Sigmoid colon (tissue), 7 donors: ENCODE measurements at regions of chr14 and their contacts with region 1.

Region 1: DNA sequence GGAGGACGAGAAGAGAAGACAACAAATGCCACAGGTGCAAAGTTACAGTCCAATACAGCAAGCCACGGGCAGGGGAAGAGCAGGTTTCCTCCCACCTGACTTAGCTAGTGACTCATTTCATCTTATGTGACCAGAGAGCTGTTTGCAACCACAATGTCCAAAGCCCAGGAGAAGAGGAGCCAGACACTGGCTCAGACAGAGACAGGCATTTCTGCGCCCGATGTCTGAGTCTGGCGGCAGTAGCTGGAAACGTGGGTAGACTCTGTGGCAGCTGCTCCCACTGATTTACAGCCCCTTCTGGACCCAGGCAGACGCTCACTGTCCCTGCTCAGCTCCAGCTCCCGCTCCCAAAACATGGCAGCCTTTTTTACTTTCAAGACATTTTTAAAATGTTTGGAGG is 60.0 kb downstream of the CHGA start:
- DNase-seq: no peak
- H3K4me3 ChIP-seq: no peak overlapping the region
- H3K27ac ChIP-seq: peak overlapping the region in 3 of 4 donors; percentile 61 to 84 (median 66)
- H3K4me1 ChIP-seq: peaks cover 0 to 52% (median 37%) of the 10 kb centered on the region in 4 donors
- H3K27me3 ChIP-seq: no peaks in the 10 kb centered on the region
- CTCF ChIP-seq: no peak
- EP300 ChIP-seq: no peak
- POLR2A ChIP-seq: no peak

Region 2: DNA sequence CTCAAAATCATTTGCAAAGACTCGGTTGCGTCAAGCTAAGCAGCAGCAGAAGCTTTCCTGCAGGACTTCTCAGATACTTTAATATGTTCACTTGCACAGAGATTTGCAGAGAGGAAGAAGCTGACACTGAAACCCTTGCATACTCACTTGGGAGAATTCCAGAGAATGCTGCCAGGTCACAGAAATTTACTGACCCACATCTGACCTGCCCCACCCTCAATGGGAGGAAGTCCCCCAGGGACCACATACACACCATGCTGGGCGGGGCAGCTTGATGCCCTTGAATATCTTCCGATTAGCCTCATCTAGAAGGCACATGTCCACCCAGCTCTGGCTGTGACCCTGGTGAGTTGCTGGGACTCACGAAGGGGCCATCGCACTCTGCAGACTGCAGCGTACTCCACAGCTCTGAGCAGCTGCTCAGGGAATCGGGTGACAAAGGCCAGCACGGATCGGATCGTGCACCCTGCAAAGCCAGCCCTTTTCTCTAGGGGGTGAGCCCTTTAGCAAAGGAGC is 49.5 kb after region 1 on chr14:
- intact Hi-C with region 1: no loop called
- DNase-seq: no peak
- H3K4me3 ChIP-seq: no peak overlapping the region
- H3K27ac ChIP-seq: peak overlapping the region; percentile 74 to 94 (median 78)
- H3K4me1 ChIP-seq: peaks cover 0 to 76% (median 70%) of the 10 kb centered on the region in 4 donors
- H3K27me3 ChIP-seq: no peaks in the 10 kb centered on the region
- CTCF ChIP-seq: no peak
- EP300 ChIP-seq: no peak
- POLR2A ChIP-seq: no peak

Region 3: GRCh38 chr14:93045965-93046704 is 63.2 kb after region 1 on chr14:
- intact Hi-C with region 1: loop called (anchors 5 kb)
- DNase-seq: no peak
- H3K4me3 ChIP-seq: no peak overlapping the region
- H3K27ac ChIP-seq: peak overlapping the region; percentile 22 to 94 (median 69)
- H3K4me1 ChIP-seq: peaks cover 0 to 83% (median 62%) of the 10 kb centered on the region in 4 donors
- H3K27me3 ChIP-seq: no peaks in the 10 kb centered on the region
- CTCF ChIP-seq: no peak
- EP300 ChIP-seq: no peak
- POLR2A ChIP-seq: no peak